GM13977 (cell line): ENCODE measurements at regions of chr18 and their contacts with region 1.

Region 1: GRCh38 chr18:8654503-8655451 is 45.5 kb downstream of the RAB12 start:
- DNase-seq: peak; percentile 65
- CTCF ChIP-seq: peak; percentile 64

Region 2: DNA sequence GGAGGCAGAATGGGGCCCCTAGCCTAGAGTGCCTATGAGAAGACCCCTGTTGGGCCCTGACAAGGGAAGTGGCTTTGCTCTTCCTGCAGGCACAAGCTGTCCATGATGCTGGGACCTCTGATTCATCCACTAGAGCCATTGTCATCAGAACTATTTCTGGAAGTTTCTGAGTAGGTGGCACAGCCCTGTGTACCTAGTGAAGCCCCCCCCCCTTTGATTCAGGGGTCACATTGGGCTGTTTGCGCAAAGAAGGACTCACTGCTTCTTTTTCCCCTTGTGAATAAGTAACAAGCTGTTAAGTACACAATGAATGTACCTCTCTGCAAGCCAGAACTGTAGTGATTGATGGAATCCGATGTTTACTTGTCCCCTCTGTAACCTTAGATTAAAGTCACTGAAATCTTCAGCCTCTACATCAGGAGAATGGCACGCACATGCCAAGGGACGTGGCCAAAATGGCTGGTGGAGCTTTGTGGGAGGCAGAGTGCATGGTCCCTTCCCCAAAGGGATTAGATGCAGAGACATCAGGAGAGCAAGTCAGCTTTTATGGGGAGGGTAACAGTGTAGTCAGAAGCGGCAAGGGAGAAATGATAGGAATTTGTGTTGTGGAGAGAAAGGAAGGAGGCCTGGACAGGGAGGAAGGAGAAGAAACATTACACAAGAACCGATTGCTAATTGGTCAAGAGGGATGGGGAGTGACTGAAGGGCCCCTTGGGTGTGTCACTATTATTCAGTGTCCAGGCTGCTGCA is 313.1 kb before region 1 on chr18:
- in situ Hi-C with region 1: no loop called
- DNase-seq: no peak
- CTCF ChIP-seq: no peak

Region 3: DNA sequence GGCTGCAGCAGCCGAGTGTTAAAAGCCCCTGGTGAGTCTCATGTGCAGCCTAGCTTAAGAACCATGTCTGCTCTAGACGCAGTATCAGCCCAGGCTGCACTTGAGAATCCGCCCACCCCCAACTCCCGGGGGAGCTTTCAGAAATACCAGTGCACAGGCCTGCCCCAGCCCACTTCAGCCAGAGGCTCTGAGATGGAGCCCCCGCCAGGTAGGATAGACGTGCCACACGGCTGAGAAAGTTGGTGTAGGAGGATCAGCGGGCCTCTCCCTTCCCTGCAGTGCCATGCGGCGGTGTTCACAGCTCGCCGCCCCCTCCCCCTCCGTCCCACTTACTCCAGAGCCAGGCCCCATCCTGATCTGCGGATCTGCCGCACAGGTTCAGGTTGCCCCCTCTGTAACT is 254.5 kb before region 1 on chr18:
- in situ Hi-C with region 1: no loop called
- DNase-seq: no peak
- CTCF ChIP-seq: no peak

Region 4: DNA sequence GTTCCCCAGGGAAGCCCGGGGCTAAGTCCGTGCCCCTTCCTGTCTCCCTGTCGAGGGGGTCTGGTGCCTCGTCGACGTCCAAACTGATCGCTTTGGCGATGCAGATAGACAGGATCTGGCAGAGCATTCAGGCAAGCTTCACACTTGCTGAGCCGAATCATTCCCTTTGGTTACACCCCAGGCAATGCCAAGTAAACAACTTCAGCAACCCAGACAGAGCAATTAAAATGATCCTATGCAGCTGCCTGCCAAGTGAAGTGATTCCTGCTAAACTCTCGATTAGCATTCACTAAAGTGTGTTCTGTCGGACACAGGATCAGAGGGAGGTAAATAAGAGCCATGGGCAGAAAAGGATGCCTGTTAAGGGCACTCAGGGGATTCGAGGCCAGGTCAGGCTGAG is 153.7 kb before region 1 on chr18:
- in situ Hi-C with region 1: no loop called
- DNase-seq: no peak
- CTCF ChIP-seq: no peak

Region 5: GRCh38 chr18:8771930-8772329 is 117.2 kb after region 1 on chr18:
- in situ Hi-C with region 1: no loop called
- DNase-seq: no peak
- CTCF ChIP-seq: no peak

Region 6: DNA sequence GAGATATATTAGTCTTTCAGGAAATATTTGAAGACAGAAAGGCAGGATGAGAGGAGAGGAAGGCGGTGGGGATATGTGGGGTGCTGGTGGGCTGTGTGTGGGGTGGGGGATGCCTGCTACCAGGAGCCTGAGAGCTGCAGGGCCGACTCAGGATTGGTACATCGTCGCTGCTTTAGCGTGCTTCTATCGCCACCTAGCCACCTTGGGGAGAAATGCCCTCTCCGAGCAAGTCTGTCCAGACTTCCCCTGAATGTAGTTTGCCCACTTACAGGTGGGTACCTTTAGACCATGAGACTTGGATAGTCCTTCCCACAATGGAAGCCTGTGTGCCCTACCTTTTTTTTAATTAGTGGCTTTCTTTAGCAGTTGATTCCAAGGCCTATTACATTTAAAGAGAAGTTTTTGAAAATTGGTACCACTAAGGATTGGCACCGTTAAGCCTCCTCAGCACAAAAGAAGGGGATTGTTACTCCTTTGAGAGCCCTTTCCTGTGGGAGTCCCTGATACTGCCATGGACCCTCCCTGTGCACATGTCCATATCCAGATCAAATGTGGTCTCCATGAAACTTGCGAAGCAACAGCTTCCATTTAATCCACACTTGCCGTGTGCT is 333.6 kb after region 1 on chr18:
- in situ Hi-C with region 1: loop called (anchors 25 kb)
- DNase-seq: peak; percentile 73
- CTCF ChIP-seq: peak; percentile 91

Region 7: GRCh38 chr18:9516437-9517064 is 861.8 kb after region 1 on chr18:
- in situ Hi-C with region 1: loop called (anchors 25 kb)
- DNase-seq: peak; percentile 55
- CTCF ChIP-seq: peak; percentile 77